Colonic mucosa (tissue), 4 donors: ENCODE measurements at regions of chr12 and their contacts with region 1.

Region 1: GRCh38 chr12:12983420-12984035 is 16.5 kb downstream of the HEBP1 start:
- DNase-seq: peak; percentile 42
- H3K4me3 ChIP-seq: no peak overlapping the region
- H3K27ac ChIP-seq: no peak overlapping the region
- H3K4me1 ChIP-seq: no peaks in the 10 kb centered on the region
- H3K27me3 ChIP-seq: no peaks in the 10 kb centered on the region
- CTCF ChIP-seq: peak; percentile 36

Region 2: GRCh38 chr12:12786716-12787601 is 196.6 kb before region 1 on chr12:
- intact Hi-C with region 1: loop called (anchors 5 kb)
- DNase-seq: peak; percentile 71
- H3K4me3 ChIP-seq: peak overlapping the region; percentile 62
- H3K27ac ChIP-seq: peak overlapping the region; percentile 89
- H3K4me1 ChIP-seq: peaks cover 6% of the 10 kb centered on the region
- H3K27me3 ChIP-seq: no peaks in the 10 kb centered on the region
- CTCF ChIP-seq: no peak

Region 3: DNA sequence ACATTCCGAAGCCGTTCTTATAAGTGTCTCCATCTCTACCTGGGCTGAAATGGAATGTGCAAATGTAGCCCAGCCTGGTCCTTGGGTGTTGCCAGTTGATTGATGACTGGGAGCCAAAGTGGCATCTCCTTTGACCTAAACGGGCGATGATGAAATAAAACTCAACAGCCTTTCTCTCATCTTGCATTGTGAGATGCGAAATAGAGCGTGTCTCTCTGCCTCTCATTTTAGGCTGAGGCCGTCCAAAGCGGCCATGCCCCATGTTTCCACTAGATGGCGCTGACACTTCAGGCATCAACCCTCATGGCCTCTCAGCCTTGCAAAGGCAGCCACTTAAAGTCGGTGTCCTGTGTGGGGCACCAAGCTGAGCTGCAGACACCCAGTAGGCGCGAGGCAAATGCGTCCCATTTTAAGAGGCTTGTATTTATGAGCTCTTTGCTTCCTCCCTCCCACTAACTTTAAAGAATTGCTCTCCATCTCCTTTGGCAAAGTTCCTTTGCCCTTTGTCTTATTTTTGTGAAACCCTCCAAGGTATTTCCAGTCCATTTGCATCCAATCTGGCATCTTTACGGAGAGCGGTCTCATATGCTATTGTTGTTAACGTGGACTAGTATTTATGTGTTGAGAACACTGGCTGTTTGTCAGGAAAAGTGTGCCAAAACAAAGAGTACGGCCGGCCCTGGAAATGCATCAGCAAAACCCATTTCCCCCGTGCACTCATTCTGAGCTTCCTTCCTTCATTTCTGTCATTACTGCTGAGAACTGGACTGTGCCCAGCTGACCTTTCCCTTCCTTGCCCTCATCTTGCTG is 67.2 kb before region 1 on chr12:
- intact Hi-C with region 1: loop called (anchors 5 kb)
- DNase-seq: peak; percentile 89
- H3K4me3 ChIP-seq: no peak overlapping the region
- H3K27ac ChIP-seq: no peak overlapping the region
- H3K4me1 ChIP-seq: no peaks in the 10 kb centered on the region
- H3K27me3 ChIP-seq: no peaks in the 10 kb centered on the region
- CTCF ChIP-seq: peak; percentile 98

Region 4: GRCh38 chr12:13211859-13212664 is 228.5 kb after region 1 on chr12:
- intact Hi-C with region 1: loop called (anchors 10 kb)
- DNase-seq: peak; percentile 76
- H3K4me3 ChIP-seq: no peak overlapping the region
- H3K27ac ChIP-seq: no peak overlapping the region
- H3K4me1 ChIP-seq: no peaks in the 10 kb centered on the region
- H3K27me3 ChIP-seq: no peaks in the 10 kb centered on the region
- CTCF ChIP-seq: peak; percentile 73